BJ (cell line): ENCODE measurements at regions of chr9 and their contacts with region 1.

Region 1: GRCh38 chr9:122475717-122476116 is 2.0 kb downstream of the OR1J1 start:
- DNase-seq: no peak
- H3K4me3 ChIP-seq: no peak overlapping the region
- H3K27me3 ChIP-seq: no peaks in the 10 kb centered on the region
- CTCF ChIP-seq: no peak

Region 2: DNA sequence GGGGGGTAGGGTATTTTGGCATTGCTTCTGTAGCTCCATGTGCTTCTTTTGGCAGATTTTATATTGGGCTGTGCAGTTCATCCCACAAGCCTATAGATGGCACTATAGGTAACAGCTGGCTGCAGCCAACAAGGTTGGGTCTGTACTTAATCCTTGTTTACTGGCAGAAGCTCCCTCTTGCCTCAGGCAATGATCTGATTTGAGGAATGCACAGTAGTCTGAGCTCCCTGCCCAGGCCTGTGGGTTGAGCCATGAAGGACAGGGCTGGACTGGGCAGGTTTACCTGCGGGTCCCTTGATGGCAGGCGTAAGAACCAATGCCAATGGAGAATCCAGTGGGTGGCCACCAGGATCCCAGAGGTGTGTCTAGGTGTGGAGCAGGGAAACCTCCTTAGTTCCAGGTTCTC is 23.2 kb after region 1 on chr9:
- CTCF ChIA-PET with region 1: interaction called, 14 read pairs
- POLR2A ChIA-PET with region 1: interaction called, 3 read pairs
- DNase-seq: peak; percentile 15
- H3K4me3 ChIP-seq: no peak overlapping the region
- H3K27me3 ChIP-seq: no peaks in the 10 kb centered on the region; the same call in 1 of the 2 replicates
- CTCF ChIP-seq: peak; percentile 84